Activated CD4-positive, alpha-beta memory T cell treated with anti-CD3 and anti-CD28 coated beads for 36 hours (primary cell): ENCODE measurements at regions of chr1 and their contacts with region 1.

Region 1: DNA sequence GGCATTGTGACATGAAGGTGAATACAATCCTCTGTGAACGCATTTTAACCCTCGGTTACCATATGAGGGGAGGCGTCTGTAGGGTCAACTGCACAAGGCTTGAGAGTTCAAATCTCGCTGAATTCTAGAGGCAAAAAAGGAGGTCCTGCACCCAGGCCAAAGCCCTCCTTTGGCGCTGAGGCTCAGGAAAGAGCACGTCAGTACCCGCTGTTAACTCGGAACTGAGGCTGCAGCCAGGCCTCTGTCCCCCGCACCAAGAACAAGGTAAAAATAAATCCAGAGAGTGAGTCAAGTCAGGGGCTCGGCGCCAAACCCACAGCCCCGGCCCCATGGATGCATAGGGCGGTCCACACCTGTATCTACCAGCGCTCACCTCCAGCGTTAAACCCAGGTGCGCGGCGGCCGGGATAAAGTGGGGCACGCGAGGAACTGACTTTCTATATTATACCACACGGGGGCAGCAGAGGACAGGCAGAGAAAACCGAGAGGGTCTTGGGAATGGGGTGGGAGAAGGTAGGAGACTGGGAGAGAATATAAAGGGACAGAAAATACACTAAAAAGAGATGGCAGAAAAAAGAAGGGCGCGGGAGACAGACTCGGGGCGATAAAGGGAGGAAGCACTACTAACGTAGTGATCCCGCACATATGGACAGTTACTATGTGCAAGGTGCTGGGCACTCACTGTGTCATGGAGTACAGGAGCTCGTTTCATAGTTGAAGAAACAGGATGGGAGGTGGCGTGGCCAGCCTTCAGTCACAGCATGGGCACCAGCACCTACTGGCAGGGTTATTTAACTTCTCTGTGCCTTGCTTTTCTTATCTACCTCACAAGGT is 54.8 kb downstream of the DMRTA2 start:
- DNase-seq: peak; percentile 40
- H3K4me3 Mint-ChIP-seq: no peak overlapping the region
- H3K27ac Mint-ChIP-seq: no peak overlapping the region
- H3K4me1 Mint-ChIP-seq: peaks cover 3% of the 10 kb centered on the region
- H3K27me3 Mint-ChIP-seq: peaks cover 23% of the 10 kb centered on the region

Region 2: DNA sequence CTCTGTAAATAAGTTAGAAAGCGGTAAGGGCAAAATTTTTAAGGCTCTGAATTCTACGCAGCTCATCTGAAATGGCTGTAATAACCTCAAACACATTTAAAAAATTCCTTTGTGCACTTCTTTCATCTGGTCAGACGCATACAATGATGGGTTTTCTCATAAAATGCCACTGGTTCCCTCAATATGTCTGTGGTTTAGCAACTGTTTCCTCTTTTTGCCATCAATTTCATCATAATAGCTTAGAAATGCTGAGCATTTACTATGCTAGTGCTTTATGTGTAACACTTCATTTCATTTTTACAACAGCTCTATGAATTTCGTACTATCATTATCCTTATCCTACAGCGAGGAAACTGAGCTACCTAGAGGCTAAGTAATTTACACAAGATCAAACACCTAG is 90.1 kb after region 1 on chr1:
- CTCF ChIA-PET with region 1: no interaction called
- POLR2A ChIA-PET with region 1: no interaction called
- intact Hi-C with region 1: no loop called
- DNase-seq: no peak
- H3K4me3 Mint-ChIP-seq: no peak overlapping the region
- H3K27ac Mint-ChIP-seq: no peak overlapping the region
- H3K4me1 Mint-ChIP-seq: no peaks in the 10 kb centered on the region
- H3K27me3 Mint-ChIP-seq: no peaks in the 10 kb centered on the region

Region 3: DNA sequence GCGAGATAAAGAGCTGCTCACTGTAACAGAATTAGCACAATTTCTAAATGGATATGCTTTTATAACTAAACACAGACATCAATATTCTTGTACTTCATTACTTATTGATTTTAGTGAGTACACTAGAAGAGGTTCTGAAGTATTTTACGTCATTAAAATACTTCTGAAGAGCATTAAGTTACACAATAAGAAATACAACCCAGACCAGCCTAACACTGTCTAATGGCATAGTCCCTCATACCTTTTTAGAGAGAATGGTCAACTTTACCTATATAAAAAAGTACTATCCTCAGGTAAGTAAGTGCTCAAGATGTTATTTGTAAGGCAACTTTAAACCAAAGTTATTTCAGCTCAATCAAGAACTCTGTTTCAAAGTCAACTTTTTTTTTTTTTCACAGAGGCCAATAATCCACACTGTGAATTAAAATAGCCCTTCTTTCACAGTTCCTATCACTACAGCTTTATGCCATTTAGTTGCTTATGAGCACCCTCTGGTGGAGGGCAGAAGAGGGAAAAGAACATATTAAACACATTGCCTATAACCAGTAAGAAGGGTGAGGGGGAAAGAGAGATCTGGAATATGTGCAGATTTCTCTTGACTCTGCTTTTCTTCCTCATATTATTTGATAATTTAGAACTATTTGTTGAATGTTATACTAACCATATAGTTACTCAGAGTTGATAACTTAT is 236.9 kb after region 1 on chr1:
- CTCF ChIA-PET with region 1: interaction called, 6 read pairs
- POLR2A ChIA-PET with region 1: no interaction called
- intact Hi-C with region 1: loop called (anchors 1 kb)
- DNase-seq: no peak
- H3K4me3 Mint-ChIP-seq: no peak overlapping the region
- H3K27ac Mint-ChIP-seq: no peak overlapping the region
- H3K4me1 Mint-ChIP-seq: no peaks in the 10 kb centered on the region
- H3K27me3 Mint-ChIP-seq: no peaks in the 10 kb centered on the region

Region 4: DNA sequence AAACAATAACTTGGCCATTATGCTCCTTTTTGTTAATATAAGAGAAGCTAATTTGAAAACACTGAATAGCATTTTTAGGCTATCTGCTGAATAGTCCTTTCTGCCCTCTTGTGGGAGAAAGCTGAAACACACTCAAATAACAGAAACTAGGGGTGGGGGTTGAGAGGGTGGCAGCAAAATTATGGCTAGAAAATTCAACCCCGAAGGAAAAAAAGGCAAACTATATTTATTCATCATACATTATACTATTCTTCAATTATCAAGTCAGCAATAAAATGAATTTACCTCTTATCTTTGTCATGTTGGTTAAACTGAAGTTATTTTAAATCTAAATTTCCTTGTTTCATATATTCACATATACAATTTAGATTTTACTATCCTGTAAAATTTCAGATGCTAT is 335.7 kb after region 1 on chr1:
- CTCF ChIA-PET with region 1: interaction called, 5 read pairs
- POLR2A ChIA-PET with region 1: no interaction called
- intact Hi-C with region 1: loop called (anchors 1 kb)
- DNase-seq: no peak
- H3K4me3 Mint-ChIP-seq: no peak overlapping the region
- H3K27ac Mint-ChIP-seq: no peak overlapping the region
- H3K4me1 Mint-ChIP-seq: no peaks in the 10 kb centered on the region
- H3K27me3 Mint-ChIP-seq: no peaks in the 10 kb centered on the region

Region 5: GRCh38 chr1:50735443-50735842 is 367.0 kb after region 1 on chr1:
- CTCF ChIA-PET with region 1: no interaction called
- POLR2A ChIA-PET with region 1: no interaction called
- intact Hi-C with region 1: loop called (anchors 10 kb)
- DNase-seq: no peak
- H3K4me3 Mint-ChIP-seq: no peak overlapping the region
- H3K27ac Mint-ChIP-seq: no peak overlapping the region
- H3K4me1 Mint-ChIP-seq: peaks cover 7% of the 10 kb centered on the region
- H3K27me3 Mint-ChIP-seq: no peaks in the 10 kb centered on the region